Ascending aorta (tissue), 2 donors: ENCODE measurements at regions of chr2 and their contacts with region 1.

Region 1: GRCh38 chr2:26959331-26959730 is 11.1 kb upstream of the MAPRE3 start:
- DNase-seq: no peak
- H3K4me3 ChIP-seq: no peak overlapping the region
- H3K27ac ChIP-seq: no peak overlapping the region
- H3K4me1 ChIP-seq: no peaks in the 10 kb centered on the region
- H3K27me3 ChIP-seq: peaks cover 4% of the 10 kb centered on the region
- CTCF ChIP-seq: no peak

Region 2: DNA sequence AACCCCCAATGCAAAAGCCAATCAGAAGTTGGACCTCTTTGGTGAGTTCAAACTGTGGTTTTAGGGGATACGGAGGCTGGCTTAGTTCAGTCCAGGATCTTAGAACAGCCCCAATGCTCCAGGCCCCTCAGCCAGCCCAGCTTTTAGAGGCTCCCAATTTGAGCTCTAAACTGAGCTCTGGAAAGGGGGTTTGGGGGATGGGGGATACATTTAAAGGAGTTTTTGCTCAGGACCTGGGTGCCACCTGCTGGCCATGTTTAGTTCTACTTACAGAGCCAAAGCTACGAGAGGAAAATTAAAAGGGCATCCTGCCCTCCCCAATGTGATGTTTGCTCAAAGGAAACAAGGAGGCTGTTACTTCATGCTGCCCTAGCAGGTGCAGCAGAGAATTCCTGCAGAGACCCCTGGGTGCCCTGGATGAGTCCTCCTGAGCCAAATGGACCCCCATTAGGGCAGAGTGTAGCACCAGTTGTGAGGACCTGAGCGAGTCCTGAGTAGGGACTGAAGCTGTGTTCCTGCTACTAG is 57.5 kb after region 1 on chr2:
- intact Hi-C with region 1: loop called (anchors 1 kb)
- DNase-seq: peak in 1 of 2 donors; percentile 65
- H3K4me3 ChIP-seq: no peak overlapping the region
- H3K27ac ChIP-seq: no peak overlapping the region
- H3K4me1 ChIP-seq: peaks cover 0 to 2% of the 10 kb centered on the region in 2 donors
- H3K27me3 ChIP-seq: no peaks in the 10 kb centered on the region
- CTCF ChIP-seq: peak; percentile 36 to 66 (median 45)

Region 3: GRCh38 chr2:27281855-27282559 is 322.7 kb after region 1 on chr2 and contains the start of gene TRIM54:
- intact Hi-C with region 1: loop called (anchors 1 kb)
- DNase-seq: no peak
- H3K4me3 ChIP-seq: no peak within 1 kb of the TSS
- H3K27ac ChIP-seq: no peak within 1 kb of the TSS
- H3K4me1 ChIP-seq: no peaks in the 10 kb centered on the region
- H3K27me3 ChIP-seq: no peaks in the 10 kb centered on the region
- CTCF ChIP-seq: no peak
- total RNA-seq, gene TRIM54: not detected